ENCODE measurements at regions of chr1 and their contacts with region 1.

Region 1: DNA sequence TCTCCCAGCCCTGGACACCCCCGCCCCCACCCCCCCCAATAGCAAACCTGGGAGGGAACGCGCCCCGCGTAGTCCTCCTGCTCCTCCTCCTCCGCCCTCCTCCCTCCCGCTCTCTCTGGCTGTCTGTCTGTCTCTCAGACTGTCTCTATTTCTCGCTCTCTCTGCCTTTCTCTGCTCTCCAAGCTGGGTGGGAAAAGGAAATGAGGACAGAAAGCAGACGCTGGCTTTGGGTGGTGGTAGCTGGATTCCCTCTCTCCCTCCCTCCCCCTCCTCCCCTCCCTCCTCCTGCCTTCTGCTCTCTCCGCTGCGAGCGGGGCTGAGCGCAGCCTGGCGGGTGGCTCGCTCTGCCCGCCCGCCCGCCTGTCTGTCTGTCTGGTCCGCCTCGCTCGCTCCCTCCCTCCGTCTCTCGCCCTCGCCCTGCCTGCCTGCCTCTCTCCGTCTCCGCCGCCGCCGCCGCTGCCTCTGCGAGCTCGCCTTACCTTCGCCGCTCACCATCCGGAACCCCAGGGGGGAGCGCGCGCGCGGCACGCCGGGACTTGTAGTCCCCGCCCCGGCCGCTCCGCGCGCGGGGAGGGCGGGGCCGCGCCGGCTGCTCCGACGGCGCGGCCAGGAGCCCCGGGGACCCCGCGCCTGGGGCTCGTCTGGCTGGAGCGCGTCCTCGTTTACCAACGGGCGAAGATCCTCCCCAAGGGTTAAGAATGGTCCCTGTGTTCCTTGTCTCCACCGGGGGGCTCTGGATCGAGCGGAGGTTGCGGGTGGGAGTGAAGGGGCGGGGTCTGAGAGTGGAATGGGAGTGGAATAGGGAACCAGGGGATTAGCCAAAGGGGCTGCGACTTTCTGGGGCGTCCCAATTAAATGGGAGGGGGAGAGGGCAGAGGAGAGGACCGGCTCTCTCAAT is at the start of gene AHDC1:
- DNase-seq: peak; percentile 90 to 96 (median 93)
- ATAC-seq: peak; percentile 82
- H3K4me3 ChIP-seq: peak within 1 kb of the TSS; percentile 89
- H3K27ac ChIP-seq: peak within 1 kb of the TSS; percentile 80
- H3K4me1 ChIP-seq: peaks cover 69% of the 10 kb centered on the region in 2 experiments
- H3K27me3 ChIP-seq: 0 out of 5 replicates have a peak, but pooled peaks cover 0 to under 1% of the 10 kb centered on the region in 2 experiments
- CTCF ChIP-seq: peak in 2 of 3 experiments; percentile 2 to 15; a peak in 1 of 6 replicates
- EP300 ChIP-seq: no peak
- POLR2A ChIP-seq: peak; percentile 86
- RAD21 ChIP-seq: peak; percentile 14 to 44; a peak in 3 of 4 replicates
- polyA plus RNA-seq, gene AHDC1: 0.21 to 0.59 TPM

Region 2: DNA sequence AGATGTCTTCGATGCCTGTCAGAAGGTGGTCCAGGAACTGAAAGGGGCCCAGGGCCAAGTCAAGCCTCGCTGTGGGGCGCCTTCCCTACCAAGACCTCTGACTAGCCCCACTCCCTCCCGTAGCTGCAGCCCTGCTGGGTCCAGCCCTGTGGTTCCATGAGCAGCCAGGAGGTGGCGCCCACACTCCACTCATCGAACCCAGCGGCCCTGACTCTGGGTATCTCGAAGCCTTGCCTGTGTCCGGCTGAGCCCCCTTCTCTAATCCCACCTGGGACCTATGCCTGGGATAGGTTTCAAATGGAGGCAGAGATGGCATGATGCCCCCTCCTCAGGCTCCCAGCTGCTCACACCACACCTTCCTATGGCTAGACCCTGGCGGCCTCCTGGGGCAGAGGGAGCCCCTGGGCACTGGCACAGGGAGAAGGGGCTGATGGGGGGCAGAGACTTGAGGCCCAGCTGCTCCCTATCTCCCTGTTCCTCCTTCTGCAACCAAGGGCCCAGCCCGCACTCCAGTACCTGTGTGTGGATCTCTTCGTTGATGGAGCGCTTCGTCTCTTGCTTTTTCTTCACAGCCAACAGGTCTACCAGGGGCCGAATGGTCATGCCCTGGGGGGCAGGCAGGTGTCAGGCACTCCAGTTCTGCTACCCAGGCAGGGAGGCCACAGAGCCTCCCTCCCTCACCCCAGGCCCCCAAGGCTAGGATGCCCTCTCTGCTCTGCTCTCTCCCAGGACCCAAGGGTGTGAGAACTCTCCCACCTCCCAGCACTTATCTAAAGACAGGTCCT is 501.0 kb before region 1 on chr1:
- CTCF ChIA-PET with region 1: interaction called, 4 read pairs
- POLR2A ChIA-PET with region 1: no interaction called
- in situ Hi-C with region 1: loop called (anchors 25 kb)
- intact Hi-C with region 1: loop called (anchors 1 kb)
- DNase-seq: peak; percentile 85 to 90 (median 88)
- ATAC-seq: peak; percentile 89
- H3K4me3 ChIP-seq: no peak overlapping the region
- H3K27ac ChIP-seq: no peak overlapping the region
- H3K4me1 ChIP-seq: peaks cover 18 to 57% of the 10 kb centered on the region in 2 experiments
- H3K27me3 ChIP-seq: no peaks in the 10 kb centered on the region; a peak in 1 of 5 replicates
- CTCF ChIP-seq: peak; percentile 97 to 99 (median 97)
- EP300 ChIP-seq: no peak
- POLR2A ChIP-seq: no peak
- RAD21 ChIP-seq: peak; percentile 95 to 98

Region 3: DNA sequence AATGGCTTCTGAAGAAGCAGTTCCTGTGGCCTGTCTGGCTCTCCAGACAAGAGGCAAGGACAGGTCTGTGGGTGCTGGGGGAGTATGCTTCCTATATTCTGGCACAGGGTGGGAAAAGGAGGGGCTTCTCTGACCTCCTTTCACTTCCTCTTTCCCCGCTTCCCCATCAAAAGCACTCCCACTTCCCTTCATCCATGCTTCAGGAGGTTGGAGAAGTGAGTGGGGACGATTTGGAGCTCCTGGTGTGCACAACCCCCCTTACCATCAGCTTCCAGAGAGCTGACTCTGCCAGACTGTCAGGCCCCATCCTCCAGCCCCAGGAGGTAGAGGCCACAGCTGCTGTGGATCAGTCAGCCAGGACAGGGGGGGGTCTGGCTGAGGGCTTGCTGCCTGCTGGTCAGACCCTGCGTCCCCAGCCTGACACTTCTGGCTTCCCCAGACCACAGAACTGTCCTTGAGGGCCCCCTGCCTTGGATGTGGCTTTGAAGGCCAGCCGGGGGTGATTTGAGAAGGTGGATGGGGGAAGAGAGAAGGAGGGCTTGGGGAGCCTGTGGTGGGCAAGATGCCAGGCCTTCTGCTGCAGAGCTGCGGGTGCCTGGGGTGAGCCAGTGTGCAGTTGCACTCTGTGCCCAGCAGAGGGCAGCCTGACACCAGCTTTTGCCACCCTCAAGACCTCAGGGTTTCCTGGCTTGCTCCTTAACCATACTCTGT is 303.4 kb before region 1 on chr1:
- CTCF ChIA-PET with region 1: interaction called, 11 read pairs
- POLR2A ChIA-PET with region 1: no interaction called
- in situ Hi-C with region 1: no loop called
- intact Hi-C with region 1: loop called (anchors 5 kb)
- DNase-seq: peak; percentile 88 to 93 (median 90)
- ATAC-seq: peak; percentile 95
- H3K4me3 ChIP-seq: no peak overlapping the region
- H3K27ac ChIP-seq: no peak overlapping the region
- H3K4me1 ChIP-seq: peaks cover 0 to 7% of the 10 kb centered on the region in 2 experiments; a peak in 2 of 5 replicates
- H3K27me3 ChIP-seq: no peaks in the 10 kb centered on the region
- CTCF ChIP-seq: peak; percentile 97 to 99 (median 98)
- EP300 ChIP-seq: no peak
- POLR2A ChIP-seq: no peak
- RAD21 ChIP-seq: peak; percentile 93 to 98

Region 4: DNA sequence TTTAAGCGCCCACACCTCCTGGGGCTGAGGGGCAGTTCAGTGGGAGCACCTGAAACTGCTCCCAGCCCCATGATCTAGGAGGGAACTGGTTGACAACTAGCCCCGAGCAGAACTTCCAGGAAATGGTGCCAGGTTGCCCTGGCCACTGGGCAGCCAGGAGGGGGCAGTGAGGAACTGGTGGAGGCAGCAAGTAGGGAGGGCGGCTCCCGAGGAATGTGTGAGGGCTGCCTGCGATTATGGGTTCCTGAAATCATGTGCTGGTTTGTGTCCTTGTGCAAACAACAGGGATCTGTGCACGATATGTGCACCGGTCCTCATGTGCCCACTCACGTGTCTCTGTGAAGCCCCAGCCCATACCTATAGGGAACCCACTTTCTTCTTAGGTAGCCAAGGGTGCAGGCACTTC is 201.6 kb before region 1 on chr1:
- CTCF ChIA-PET with region 1: interaction called, 20 read pairs
- POLR2A ChIA-PET with region 1: interaction called, 4 read pairs
- in situ Hi-C with region 1: loop called (anchors 5 kb)
- intact Hi-C with region 1: loop called (anchors 1 kb)
- DNase-seq: peak in 1 of 4 experiments; percentile 40
- ATAC-seq: peak; percentile 44
- H3K4me3 ChIP-seq: no peak overlapping the region
- H3K27ac ChIP-seq: no peak overlapping the region
- H3K4me1 ChIP-seq: peaks cover 0 to 23% of the 10 kb centered on the region in 2 experiments; a peak in 3 of 5 replicates
- H3K27me3 ChIP-seq: no peaks in the 10 kb centered on the region
- CTCF ChIP-seq: peak; percentile 38 to 50 (median 42); a peak in 4 of 6 replicates
- EP300 ChIP-seq: no peak
- POLR2A ChIP-seq: peak; percentile 60
- RAD21 ChIP-seq: peak in 1 of 2 experiments; percentile 40; a peak in 1 of 4 replicates

Region 5: GRCh38 chr1:27430903-27431600 is 172.9 kb before region 1 on chr1:
- CTCF ChIA-PET with region 1: no interaction called
- POLR2A ChIA-PET with region 1: interaction called, 3 read pairs
- in situ Hi-C with region 1: loop called (anchors 10 kb)
- intact Hi-C with region 1: no loop called
- DNase-seq: peak in 3 of 4 experiments; percentile 24 to 51 (median 36)
- ATAC-seq: peak; percentile 3; the same call in 1 of the 3 replicates
- H3K4me3 ChIP-seq: no peak overlapping the region
- H3K27ac ChIP-seq: peak overlapping the region; percentile 52; the same call in 1 of the 3 replicates
- H3K4me1 ChIP-seq: peaks cover 21 to 71% of the 10 kb centered on the region in 2 experiments
- H3K27me3 ChIP-seq: no peaks in the 10 kb centered on the region
- CTCF ChIP-seq: peak in 1 of 3 experiments; percentile 26; a peak in 2 of 6 replicates
- EP300 ChIP-seq: no peak
- POLR2A ChIP-seq: no peak
- RAD21 ChIP-seq: peak in 1 of 2 experiments; percentile 35; a peak in 2 of 4 replicates

Region 6: DNA sequence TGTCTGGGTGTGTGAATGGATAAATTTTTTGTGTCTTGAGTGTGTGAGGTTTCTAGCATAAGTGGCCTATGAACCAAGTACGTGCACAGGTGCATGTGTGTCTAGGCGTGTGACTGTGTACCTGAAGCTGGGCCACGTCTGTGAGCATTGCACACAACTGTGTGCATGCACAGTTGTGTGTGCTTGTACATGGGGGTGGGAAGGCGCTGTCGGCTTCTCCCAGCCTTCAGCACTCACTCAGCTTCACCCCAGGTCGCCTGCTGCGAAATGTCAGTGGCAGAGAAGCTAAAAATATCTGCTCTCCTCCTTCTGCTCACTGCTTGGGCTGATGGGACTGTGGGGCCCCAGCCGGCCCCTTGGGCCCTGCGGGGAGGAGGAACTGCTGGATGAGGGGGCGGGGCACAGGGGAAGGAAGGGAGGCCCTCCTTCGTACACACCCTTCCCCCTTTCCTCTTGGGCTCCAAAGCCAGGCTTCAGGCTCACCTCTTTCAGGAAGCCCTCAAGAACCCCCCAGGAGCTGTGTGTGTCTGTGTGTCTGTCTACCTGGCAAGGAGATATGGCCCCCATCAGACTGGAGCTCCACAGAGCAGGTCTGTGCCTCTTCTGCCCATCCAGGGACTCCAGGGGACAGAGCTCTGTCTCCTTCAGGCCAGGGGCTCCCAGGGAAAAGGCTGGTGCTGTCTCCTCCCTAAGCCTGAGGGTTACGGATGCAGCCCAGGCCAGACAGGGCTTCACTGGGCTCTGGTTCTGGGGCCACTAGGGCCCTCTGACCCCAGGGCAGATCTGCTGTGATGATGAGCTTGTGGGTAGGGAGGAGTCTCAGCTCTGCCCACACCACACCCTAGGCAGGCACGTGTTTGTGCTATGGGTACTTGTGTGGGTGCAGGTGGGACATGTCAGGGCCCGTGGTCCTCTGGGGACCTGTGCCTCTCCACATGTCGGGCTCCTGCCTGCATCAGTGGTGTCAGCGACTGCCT is 78.3 kb before region 1 on chr1:
- CTCF ChIA-PET with region 1: interaction called, 6 read pairs
- POLR2A ChIA-PET with region 1: interaction called, 3 read pairs
- in situ Hi-C with region 1: no loop called
- intact Hi-C with region 1: loop called (anchors 1 kb)
- DNase-seq: peak; percentile 94 to 97 (median 96)
- ATAC-seq: peak; percentile 90
- H3K4me3 ChIP-seq: peak overlapping the region; percentile 54
- H3K27ac ChIP-seq: peak overlapping the region; percentile 88
- H3K4me1 ChIP-seq: peaks cover 55 to 90% of the 10 kb centered on the region in 2 experiments
- H3K27me3 ChIP-seq: no peaks in the 10 kb centered on the region
- CTCF ChIP-seq: no peak
- EP300 ChIP-seq: peak; percentile 46
- POLR2A ChIP-seq: peak; percentile 86
- RAD21 ChIP-seq: peak in 1 of 2 experiments; percentile 34; a peak in 3 of 4 replicates

Region 7: DNA sequence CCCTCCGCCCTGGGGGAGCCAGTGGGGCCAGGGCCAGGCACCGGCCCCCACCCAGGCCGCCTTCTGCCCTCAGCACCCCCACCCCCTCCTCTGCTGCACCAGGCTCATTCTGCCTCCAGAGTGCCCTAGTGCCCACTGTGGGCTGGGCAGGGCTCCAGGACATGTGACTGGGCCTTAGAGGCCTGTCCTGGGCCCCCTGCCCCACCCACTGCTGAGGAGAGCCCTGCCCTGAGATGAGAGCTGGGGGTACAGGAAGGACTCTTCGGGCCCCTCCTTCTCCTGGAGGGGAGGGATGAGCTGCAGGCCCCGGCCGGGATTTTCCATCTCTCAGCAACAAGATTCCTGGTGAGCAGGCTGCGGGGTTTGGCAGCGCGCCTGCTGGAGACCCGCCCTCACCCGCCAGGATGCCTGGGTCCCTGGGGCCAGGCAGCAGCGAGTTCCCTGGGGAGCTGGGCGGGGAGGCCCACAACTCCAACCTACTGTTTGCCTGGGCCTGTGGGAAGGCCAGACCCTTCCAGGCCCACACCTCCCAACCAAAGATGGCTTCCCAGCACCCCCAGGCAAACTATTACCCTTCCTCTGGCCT is 14.0 kb before region 1 on chr1:
- CTCF ChIA-PET with region 1: no interaction called
- POLR2A ChIA-PET with region 1: interaction called, 28 read pairs
- in situ Hi-C with region 1: no loop called
- intact Hi-C with region 1: no loop called
- DNase-seq: no peak
- ATAC-seq: no peak
- H3K4me3 ChIP-seq: no peak overlapping the region
- H3K27ac ChIP-seq: no peak overlapping the region
- H3K4me1 ChIP-seq: peaks cover under 1 to 47% of the 10 kb centered on the region in 2 experiments; a peak in 3 of 5 replicates
- H3K27me3 ChIP-seq: no peaks in the 10 kb centered on the region
- CTCF ChIP-seq: no peak
- EP300 ChIP-seq: no peak
- POLR2A ChIP-seq: no peak
- RAD21 ChIP-seq: no peak